GM12878 (cell line): ENCODE measurements at regions of chr2 and their contacts with region 1.

Region 1: GRCh38 chr2:125471963-125472362 is 1184.0 kb upstream of the GYPC start:
- DNase-seq: no peak
- ATAC-seq: peak; percentile 75
- H3K4me3 ChIP-seq: no peak overlapping the region
- H3K27ac ChIP-seq: no peak overlapping the region
- H3K4me1 ChIP-seq: no peaks in the 10 kb centered on the region
- H3K27me3 ChIP-seq: no peaks in the 10 kb centered on the region
- CTCF ChIP-seq: peak; percentile 49 to 64 (median 61); a peak in 5 of 6 replicates
- EP300 ChIP-seq: no peak
- POLR2A ChIP-seq: no peak
- RAD21 ChIP-seq: peak; percentile 78

Region 2: DNA sequence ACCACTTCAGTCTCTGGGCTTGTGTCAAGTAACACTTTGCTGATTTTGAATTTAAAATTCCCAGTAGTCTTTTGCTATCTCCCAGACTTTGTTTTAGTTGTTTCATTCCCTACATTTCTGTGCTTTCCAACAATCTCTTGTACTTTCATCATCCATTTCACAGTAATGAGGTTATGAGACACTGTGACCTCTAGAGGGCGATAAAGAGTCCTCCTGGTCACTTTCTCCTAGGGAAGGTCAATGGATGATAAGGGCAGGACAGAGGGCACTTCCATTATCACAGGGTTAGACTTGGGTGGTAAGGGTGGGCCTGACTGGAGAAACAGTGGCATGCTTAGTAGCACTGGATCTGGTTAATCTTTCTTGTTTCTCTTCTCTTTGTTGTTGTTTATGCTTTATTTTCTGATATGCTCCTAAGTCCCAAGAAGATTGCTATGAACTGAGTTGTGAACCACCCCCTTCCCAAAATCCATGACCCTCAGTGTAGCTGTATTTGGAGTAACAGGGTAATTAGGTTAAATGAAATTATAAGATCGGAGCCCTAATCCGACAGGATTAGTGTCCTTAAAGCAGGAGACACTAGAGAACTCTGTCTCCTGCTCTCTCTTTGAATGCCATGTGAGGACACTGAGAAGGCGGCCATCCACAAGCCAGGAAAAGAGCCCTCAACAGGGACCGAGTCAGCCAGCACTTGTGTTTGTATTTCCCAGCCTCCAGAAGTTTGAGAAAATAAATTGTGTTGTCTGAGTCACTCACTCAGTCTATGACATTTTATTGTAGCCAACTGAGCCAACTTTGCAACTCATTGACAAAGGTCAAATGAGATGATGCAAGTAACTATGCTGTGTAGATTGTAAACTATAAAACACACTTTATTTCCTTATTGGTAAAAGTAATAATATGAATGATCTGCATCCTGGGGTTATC is 667.7 kb before region 1 on chr2:
- CTCF ChIA-PET with region 1: no interaction called
- POLR2A ChIA-PET with region 1: no interaction called
- RAD21 ChIA-PET with region 1: no interaction called
- SMC1A ChIA-PET with region 1: no interaction called
- in situ Hi-C with region 1: no loop called
- intact Hi-C with region 1: loop called (anchors 5 kb)
- DNase-seq: peak; percentile 12
- ATAC-seq: peak; percentile 81
- H3K4me3 ChIP-seq: no peak overlapping the region
- H3K27ac ChIP-seq: no peak overlapping the region
- H3K4me1 ChIP-seq: no peaks in the 10 kb centered on the region; the same call in 1 of the 2 replicates
- H3K27me3 ChIP-seq: no peaks in the 10 kb centered on the region
- CTCF ChIP-seq: peak; percentile 59 to 70 (median 67); a peak in 5 of 6 replicates
- EP300 ChIP-seq: no peak
- POLR2A ChIP-seq: no peak
- RAD21 ChIP-seq: peak; percentile 66

Region 3: GRCh38 chr2:124915567-124915966 is 556.4 kb before region 1 on chr2:
- CTCF ChIA-PET with region 1: interaction called, 12 read pairs
- POLR2A ChIA-PET with region 1: no interaction called
- RAD21 ChIA-PET with region 1: interaction called, 22 read pairs
- SMC1A ChIA-PET with region 1: interaction called, 6 read pairs
- in situ Hi-C with region 1: no loop called
- intact Hi-C with region 1: no loop called
- DNase-seq: no peak
- ATAC-seq: no peak
- H3K4me3 ChIP-seq: no peak overlapping the region
- H3K27ac ChIP-seq: no peak overlapping the region
- H3K4me1 ChIP-seq: no peaks in the 10 kb centered on the region
- H3K27me3 ChIP-seq: no peaks in the 10 kb centered on the region
- CTCF ChIP-seq: peak in 1 of 3 experiments; percentile 18; a peak in 3 of 6 replicates
- EP300 ChIP-seq: no peak
- POLR2A ChIP-seq: no peak
- RAD21 ChIP-seq: peak; percentile 80

Region 4: GRCh38 chr2:125227843-125228392 is 244.0 kb before region 1 on chr2:
- CTCF ChIA-PET with region 1: interaction called, 8 read pairs
- POLR2A ChIA-PET with region 1: no interaction called
- RAD21 ChIA-PET with region 1: no interaction called
- SMC1A ChIA-PET with region 1: interaction called, 3 read pairs
- in situ Hi-C with region 1: no loop called
- intact Hi-C with region 1: loop called (anchors 1 kb)
- DNase-seq: no peak
- ATAC-seq: no peak
- H3K4me3 ChIP-seq: no peak overlapping the region
- H3K27ac ChIP-seq: no peak overlapping the region
- H3K4me1 ChIP-seq: no peaks in the 10 kb centered on the region
- H3K27me3 ChIP-seq: no peaks in the 10 kb centered on the region
- CTCF ChIP-seq: peak in 1 of 3 experiments; percentile 25; a peak in 1 of 6 replicates
- EP300 ChIP-seq: no peak
- POLR2A ChIP-seq: no peak
- RAD21 ChIP-seq: peak; percentile 13; the same call in 1 of the 2 replicates

Region 5: DNA sequence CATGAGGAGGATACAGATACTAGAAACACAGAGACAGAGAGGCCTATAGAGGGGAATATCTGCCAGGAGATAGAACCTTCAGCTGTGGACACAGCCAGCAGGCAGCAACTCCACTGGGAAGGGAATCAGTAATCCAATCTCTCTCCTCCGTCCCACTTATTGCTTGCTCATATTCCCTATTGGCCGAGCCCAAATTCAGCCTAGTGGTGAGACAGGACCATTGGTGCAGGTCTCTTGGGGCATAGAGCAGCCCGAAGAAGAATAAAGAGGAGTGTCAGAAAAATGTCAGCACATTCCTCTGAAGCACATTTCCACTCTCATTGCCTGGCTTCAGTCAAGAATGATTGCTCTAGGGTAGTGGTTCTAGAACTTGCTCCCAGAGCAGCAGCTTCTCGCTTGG is 92.5 kb after region 1 on chr2:
- CTCF ChIA-PET with region 1: no interaction called
- POLR2A ChIA-PET with region 1: no interaction called
- RAD21 ChIA-PET with region 1: no interaction called
- SMC1A ChIA-PET with region 1: no interaction called
- in situ Hi-C with region 1: no loop called
- intact Hi-C with region 1: no loop called
- DNase-seq: no peak
- ATAC-seq: no peak
- H3K4me3 ChIP-seq: no peak overlapping the region
- H3K27ac ChIP-seq: no peak overlapping the region
- H3K4me1 ChIP-seq: no peaks in the 10 kb centered on the region
- H3K27me3 ChIP-seq: no peaks in the 10 kb centered on the region
- CTCF ChIP-seq: no peak
- EP300 ChIP-seq: no peak
- POLR2A ChIP-seq: no peak
- RAD21 ChIP-seq: no peak